Caco-2 (cell line): ENCODE measurements at regions of chr16 and their contacts with region 1.

Region 1: GRCh38 chr16:57863434-57864160 is 61.3 kb upstream of the KIFC3 start:
- DNase-seq: peak; percentile 73 to 77
- H3K4me3 ChIP-seq: no peak overlapping the region
- H3K4me3 Mint-ChIP-seq: peak overlapping the region; percentile 79
- H3K27ac Mint-ChIP-seq: peak overlapping the region; percentile 71
- H3K4me1 ChIP-seq: peaks cover 38% of the 10 kb centered on the region
- H3K4me1 Mint-ChIP-seq: peaks cover 29% of the 10 kb centered on the region
- H3K27me3 ChIP-seq: no peaks in the 10 kb centered on the region
- H3K27me3 Mint-ChIP-seq: no peaks in the 10 kb centered on the region
- CTCF ChIP-seq: peak; percentile 36 to 87

Region 2: DNA sequence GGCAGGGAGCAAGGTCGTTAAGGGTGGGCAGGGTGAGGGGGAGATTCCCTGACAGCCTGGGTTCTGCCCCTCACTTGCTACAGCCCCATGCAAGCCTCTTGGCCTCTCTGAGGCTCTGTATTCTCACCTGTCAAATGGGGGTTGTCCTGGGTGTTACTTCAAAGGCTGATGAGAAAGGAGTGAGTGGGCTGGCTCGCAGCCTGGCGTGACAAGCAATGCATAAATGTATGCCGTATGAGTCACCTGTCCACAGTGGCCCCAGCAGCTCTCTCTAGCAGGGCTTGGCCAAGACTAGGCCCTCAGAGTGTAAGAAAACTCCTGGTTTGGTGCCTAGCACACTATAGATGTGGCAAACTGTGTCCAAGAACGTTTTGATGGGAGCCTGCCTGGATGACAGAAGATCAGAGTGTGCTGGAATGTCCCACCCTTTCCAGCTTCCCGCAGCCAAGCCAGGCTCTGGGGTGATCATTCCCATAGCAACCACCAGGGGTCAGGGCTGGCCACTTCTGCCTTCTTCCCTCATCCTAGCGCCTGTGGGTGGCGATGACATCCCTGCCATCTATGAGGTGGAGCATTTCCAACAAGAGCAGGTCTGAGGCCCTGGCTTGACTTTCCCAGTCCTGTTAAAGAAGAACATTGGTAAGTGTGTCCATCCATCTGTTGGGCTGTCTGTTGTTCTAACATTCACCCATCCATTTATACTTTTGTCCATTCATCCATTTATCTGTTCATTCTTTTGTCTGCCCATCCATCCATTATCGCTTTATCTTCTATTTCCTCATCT is 272.3 kb before region 1 on chr16:
- CTCF ChIA-PET with region 1: interaction called, 3 read pairs
- POLR2A ChIA-PET with region 1: no interaction called
- intact Hi-C with region 1: loop called (anchors 10 kb)
- DNase-seq: peak; percentile 78 to 89
- H3K4me3 ChIP-seq: no peak overlapping the region
- H3K4me3 Mint-ChIP-seq: no peak overlapping the region
- H3K27ac Mint-ChIP-seq: peak overlapping the region; percentile 29
- H3K4me1 ChIP-seq: peaks cover 10% of the 10 kb centered on the region
- H3K4me1 Mint-ChIP-seq: peaks cover 8% of the 10 kb centered on the region
- H3K27me3 ChIP-seq: no peaks in the 10 kb centered on the region
- H3K27me3 Mint-ChIP-seq: no peaks in the 10 kb centered on the region
- CTCF ChIP-seq: peak; percentile 97

Region 3: GRCh38 chr16:57687363-57687929 is 176.2 kb before region 1 on chr16:
- CTCF ChIA-PET with region 1: no interaction called
- POLR2A ChIA-PET with region 1: no interaction called
- intact Hi-C with region 1: no loop called
- DNase-seq: no peak
- H3K4me3 ChIP-seq: no peak overlapping the region
- H3K4me3 Mint-ChIP-seq: no peak overlapping the region
- H3K27ac Mint-ChIP-seq: no peak overlapping the region
- H3K4me1 ChIP-seq: no peaks in the 10 kb centered on the region; the same call in 1 of the 2 replicates
- H3K4me1 Mint-ChIP-seq: peaks cover 12% of the 10 kb centered on the region
- H3K27me3 ChIP-seq: no peaks in the 10 kb centered on the region
- H3K27me3 Mint-ChIP-seq: no peaks in the 10 kb centered on the region
- CTCF ChIP-seq: no peak

Region 4: DNA sequence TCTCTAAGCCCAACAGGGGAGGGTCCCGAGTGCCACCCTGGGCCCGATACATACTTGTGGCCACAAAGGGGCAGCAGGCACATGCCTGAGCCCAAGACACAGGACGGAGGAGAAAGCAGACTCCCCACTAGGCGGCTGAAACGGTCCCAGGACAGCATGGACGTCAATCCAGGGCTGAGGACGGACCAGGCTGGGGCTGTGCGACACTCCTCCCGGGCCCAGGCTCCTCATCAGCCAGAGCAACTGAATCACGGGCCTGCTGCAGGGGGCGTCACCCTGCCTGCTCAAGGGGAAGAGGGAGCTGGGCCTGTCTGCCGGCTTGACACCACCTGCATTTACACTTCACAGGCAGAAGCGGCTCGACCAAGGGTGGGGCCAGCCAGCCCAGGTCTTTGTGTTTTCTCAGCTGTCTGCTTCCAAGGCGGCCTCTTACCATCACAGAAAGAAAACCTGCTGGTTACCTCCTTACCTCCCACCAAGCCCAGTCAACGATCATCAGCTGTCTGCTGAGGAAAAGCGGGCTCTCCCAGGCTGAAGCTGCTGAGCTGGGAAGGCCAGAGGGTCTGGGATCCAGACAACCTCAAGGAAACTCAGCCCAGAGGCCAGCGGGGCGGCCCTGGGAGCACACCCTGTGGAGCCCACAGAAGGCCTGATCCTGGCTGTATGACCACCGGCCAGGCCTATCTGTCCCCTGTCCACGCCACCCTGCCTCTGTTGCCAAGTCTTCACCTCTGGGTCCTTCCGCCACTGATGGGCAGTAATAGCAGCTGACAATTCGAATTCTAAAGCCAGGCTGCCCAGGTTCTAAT is 87.7 kb before region 1 on chr16:
- CTCF ChIA-PET with region 1: interaction called, 11 read pairs
- POLR2A ChIA-PET with region 1: no interaction called
- intact Hi-C with region 1: loop called (anchors 5 kb)
- DNase-seq: peak; percentile 70 to 73
- H3K4me3 ChIP-seq: no peak overlapping the region
- H3K4me3 Mint-ChIP-seq: no peak overlapping the region
- H3K27ac Mint-ChIP-seq: peak overlapping the region; percentile 46
- H3K4me1 ChIP-seq: no peaks in the 10 kb centered on the region
- H3K4me1 Mint-ChIP-seq: no peaks in the 10 kb centered on the region
- H3K27me3 ChIP-seq: no peaks in the 10 kb centered on the region
- H3K27me3 Mint-ChIP-seq: no peaks in the 10 kb centered on the region
- CTCF ChIP-seq: peak; percentile 40 to 77

Region 5: GRCh38 chr16:57802341-57803133 is 61.1 kb before region 1 on chr16 and contains the start of gene KIFC3:
- CTCF ChIA-PET with region 1: interaction called, 63 read pairs
- POLR2A ChIA-PET with region 1: interaction called, 10 read pairs
- intact Hi-C with region 1: no loop called
- DNase-seq: peak; percentile 92 to 94
- H3K4me3 ChIP-seq: peak within 1 kb of the TSS; percentile 80
- H3K4me3 Mint-ChIP-seq: peak within 1 kb of the TSS; percentile 92
- H3K27ac Mint-ChIP-seq: peak within 1 kb of the TSS; percentile 95
- H3K4me1 ChIP-seq: peaks cover 78% of the 10 kb centered on the region
- H3K4me1 Mint-ChIP-seq: peaks cover 66% of the 10 kb centered on the region
- H3K27me3 ChIP-seq: no peaks in the 10 kb centered on the region
- H3K27me3 Mint-ChIP-seq: no peaks in the 10 kb centered on the region
- CTCF ChIP-seq: no peak
- total RNA-seq, gene KIFC3: 103 and 108 TPM in 2 replicates

Region 6: GRCh38 chr16:57816334-57816745 is 47.3 kb before region 1 on chr16:
- CTCF ChIA-PET with region 1: interaction called, 15 read pairs
- POLR2A ChIA-PET with region 1: interaction called, 5 read pairs
- intact Hi-C with region 1: loop called (anchors 1 kb)
- DNase-seq: peak; percentile 94 to 96
- H3K4me3 ChIP-seq: no peak overlapping the region
- H3K4me3 Mint-ChIP-seq: peak overlapping the region; percentile 66
- H3K27ac Mint-ChIP-seq: peak overlapping the region; percentile 98
- H3K4me1 ChIP-seq: peaks cover 83% of the 10 kb centered on the region
- H3K4me1 Mint-ChIP-seq: peaks cover 69% of the 10 kb centered on the region
- H3K27me3 ChIP-seq: no peaks in the 10 kb centered on the region
- H3K27me3 Mint-ChIP-seq: no peaks in the 10 kb centered on the region
- CTCF ChIP-seq: no peak

Region 7: DNA sequence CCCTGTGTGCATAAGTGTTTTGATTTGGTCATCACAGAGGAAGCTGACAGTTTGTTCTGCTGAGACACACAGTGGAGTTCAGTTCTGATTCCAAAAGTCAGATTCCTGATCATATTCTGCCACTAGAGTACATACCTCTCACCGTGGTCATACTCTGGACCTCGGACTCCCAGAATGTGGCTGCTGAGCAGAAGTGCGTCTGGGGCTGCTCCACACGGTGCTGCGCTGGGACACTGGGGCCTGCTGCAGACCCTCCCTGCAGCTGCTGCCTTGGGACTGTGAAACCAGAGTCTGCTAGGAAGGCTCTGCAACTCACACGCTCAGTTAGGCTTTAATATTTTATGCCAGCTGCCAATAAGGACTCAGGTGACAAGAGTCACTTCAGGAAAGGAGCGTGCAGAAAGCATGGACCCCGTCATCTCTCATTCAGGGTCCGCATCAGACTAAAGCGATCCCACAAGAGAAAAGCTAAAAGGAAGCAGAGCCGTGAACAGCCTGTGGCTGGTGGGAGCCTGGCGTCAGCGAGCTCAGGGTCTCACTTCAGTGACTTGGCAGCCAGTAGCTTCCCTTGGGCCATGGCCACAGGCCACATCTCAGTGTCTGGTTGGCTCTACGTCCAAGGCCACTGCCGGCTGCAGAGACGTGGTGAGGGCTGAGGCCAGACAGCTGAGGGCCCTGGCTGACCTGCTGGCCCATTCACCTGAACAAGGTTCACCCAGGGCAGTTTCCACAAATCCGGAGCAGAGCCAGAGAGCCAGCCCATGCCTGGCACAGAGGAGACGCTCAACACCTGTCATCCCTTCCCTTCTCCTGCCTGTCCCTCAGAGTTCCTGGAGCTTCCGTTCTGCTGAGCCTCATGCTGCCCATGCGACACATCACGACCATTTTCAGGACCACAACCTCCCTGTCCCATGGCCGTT is 36.6 kb before region 1 on chr16:
- CTCF ChIA-PET with region 1: interaction called, 15 read pairs
- POLR2A ChIA-PET with region 1: interaction called, 5 read pairs
- intact Hi-C with region 1: loop called (anchors 1 kb)
- DNase-seq: peak; percentile 69 to 78
- H3K4me3 ChIP-seq: no peak overlapping the region
- H3K4me3 Mint-ChIP-seq: no peak overlapping the region
- H3K27ac Mint-ChIP-seq: peak overlapping the region; percentile 86
- H3K4me1 ChIP-seq: peaks cover 67% of the 10 kb centered on the region
- H3K4me1 Mint-ChIP-seq: peaks cover 52% of the 10 kb centered on the region
- H3K27me3 ChIP-seq: no peaks in the 10 kb centered on the region
- H3K27me3 Mint-ChIP-seq: no peaks in the 10 kb centered on the region
- CTCF ChIP-seq: no peak

Region 8: DNA sequence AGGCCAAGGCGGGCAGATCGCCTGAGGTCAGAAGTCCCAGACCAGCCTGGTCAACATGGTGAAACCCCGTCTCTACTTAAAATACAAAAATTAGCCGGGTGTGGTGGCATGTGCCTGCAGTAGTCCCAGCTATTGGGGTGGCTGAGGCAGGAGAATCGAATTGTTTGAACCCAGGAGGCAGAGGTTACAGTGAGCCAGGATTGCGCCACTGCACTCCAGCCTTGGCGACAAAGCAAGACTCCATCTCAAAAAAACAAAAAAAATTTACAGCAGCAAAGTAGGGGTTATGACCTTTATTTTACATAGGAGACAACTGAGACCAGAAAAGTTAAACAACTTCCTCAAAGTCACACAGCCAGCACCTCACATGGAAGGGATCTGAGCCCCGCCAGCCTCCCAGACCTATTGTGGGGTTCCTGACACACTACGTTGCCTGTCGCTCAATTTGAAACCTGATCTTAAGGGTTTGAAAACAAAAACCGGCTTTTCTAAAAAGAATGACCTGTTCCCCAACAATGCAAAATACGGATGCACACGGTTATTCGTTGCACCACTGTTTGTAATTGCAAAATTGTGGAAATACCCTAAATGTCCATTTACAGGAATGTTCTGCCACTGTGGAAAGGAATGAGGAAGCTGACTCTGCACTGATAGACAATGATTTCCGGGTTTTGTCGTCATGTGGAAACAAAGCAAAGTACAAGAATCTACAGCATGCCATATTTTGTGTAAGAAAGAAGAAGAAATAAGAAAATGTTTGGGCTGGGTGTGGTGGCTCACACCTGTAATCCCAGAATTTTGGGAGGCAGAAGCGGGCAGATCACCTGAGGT is 30.2 kb after region 1 on chr16:
- CTCF ChIA-PET with region 1: interaction called, 8 read pairs
- POLR2A ChIA-PET with region 1: no interaction called
- intact Hi-C with region 1: loop called (anchors 1 kb)
- DNase-seq: peak; percentile 73 to 74
- H3K4me3 ChIP-seq: no peak overlapping the region
- H3K4me3 Mint-ChIP-seq: peak overlapping the region; percentile 61
- H3K27ac Mint-ChIP-seq: peak overlapping the region; percentile 88
- H3K4me1 ChIP-seq: peaks cover 33% of the 10 kb centered on the region
- H3K4me1 Mint-ChIP-seq: peaks cover 42% of the 10 kb centered on the region
- H3K27me3 ChIP-seq: no peaks in the 10 kb centered on the region
- H3K27me3 Mint-ChIP-seq: no peaks in the 10 kb centered on the region
- CTCF ChIP-seq: no peak

Region 9: DNA sequence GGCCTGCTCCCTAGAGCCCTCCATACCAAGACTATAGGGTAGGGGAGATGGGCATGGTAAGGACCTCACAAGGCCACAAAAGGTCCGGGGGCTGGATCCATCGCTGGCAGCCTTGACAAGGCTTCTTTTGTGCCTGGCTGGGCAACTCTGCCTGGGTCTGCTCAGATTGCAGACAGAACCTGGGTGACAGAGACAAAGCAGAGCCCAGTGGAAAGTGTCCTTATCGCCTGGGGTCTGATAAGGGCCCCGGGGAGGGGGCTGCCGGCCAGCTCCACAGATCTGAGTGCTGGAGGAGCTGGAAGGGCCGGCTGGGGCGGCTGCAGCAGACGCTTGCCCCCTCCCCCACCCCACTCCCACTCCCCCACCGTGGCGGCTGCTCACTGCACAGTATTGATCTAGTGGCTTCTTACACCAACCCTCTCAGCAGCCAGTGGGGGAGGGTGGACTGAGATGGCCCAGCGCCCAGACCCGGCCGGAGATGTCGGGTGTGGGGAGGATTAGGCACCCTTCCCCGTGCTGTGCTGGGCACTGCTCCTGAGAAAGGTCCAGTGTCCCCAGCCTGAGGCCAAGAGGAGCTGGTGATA is 169.2 kb after region 1 on chr16:
- CTCF ChIA-PET with region 1: no interaction called
- POLR2A ChIA-PET with region 1: no interaction called
- intact Hi-C with region 1: no loop called
- DNase-seq: no peak
- H3K4me3 ChIP-seq: no peak overlapping the region
- H3K4me3 Mint-ChIP-seq: no peak overlapping the region
- H3K27ac Mint-ChIP-seq: no peak overlapping the region
- H3K4me1 ChIP-seq: peaks cover 5% of the 10 kb centered on the region
- H3K4me1 Mint-ChIP-seq: peaks cover 8% of the 10 kb centered on the region
- H3K27me3 ChIP-seq: no peaks in the 10 kb centered on the region
- H3K27me3 Mint-ChIP-seq: no peaks in the 10 kb centered on the region
- CTCF ChIP-seq: no peak